ENCODE measurements at regions of chr17 and their contacts with region 1.

Region 1: GRCh38 chr17:79970576-79971068 is 65.0 kb downstream of the TBC1D16 start:
- DNase-seq: peak; percentile 66
- ATAC-seq: peak; percentile 58
- H3K4me3 Mint-ChIP-seq: no peak overlapping the region
- H3K27ac Mint-ChIP-seq: no peak overlapping the region
- H3K4me1 Mint-ChIP-seq: peaks cover 27% of the 10 kb centered on the region
- H3K27me3 Mint-ChIP-seq: no peaks in the 10 kb centered on the region
- CTCF ChIP-seq: peak; percentile 75

Region 2: DNA sequence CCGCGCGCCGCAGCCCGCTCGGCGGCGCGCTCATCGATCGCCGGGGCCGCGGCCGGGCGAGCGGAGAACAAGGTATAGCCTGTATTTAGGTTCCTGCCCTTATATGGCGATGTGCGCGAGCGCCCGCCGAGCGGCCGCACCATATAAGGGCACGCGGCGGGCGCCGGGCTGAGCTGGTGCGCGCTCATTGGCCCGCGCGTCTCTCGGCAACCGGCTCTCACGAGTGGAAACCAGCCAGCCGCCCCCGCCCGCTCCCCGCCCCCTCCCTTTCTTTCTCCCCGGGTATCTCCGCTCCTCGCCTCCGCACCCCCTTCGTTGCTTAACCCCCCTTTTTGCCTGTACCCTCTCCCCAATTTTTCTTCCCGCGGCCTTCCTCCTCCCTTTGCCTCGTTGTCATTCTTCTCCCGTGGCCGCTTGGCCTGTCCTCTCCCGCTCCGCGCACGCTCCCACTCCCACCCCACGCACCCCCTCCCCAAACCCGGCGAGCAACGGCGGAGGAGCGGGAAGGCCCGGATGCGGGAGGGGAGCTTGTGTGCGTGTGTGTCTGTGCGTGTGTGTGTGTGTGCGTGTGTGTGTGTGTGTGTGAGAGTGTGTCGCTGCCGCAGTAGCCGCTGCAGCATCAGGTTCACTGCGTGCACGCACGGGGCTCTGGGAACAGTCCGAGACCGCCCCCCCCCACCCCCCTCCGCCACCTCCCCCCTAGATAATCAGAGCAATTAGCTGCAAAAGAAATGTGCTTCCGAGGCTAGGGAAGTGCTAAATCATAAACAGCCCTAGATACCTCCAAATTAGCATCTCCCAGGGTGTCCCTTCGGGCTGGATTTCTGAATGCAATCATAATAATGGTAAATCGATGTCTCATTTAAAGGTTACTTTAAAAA is 160.3 kb before region 1 on chr17:
- CTCF ChIA-PET with region 1: interaction called, 15 read pairs
- POLR2A ChIA-PET with region 1: no interaction called
- DNase-seq: peak; percentile 83
- ATAC-seq: peak; percentile 74
- H3K4me3 Mint-ChIP-seq: peak overlapping the region; percentile 59
- H3K27ac Mint-ChIP-seq: no peak overlapping the region
- H3K4me1 Mint-ChIP-seq: peaks cover 40% of the 10 kb centered on the region
- H3K27me3 Mint-ChIP-seq: peaks cover 92% of the 10 kb centered on the region
- CTCF ChIP-seq: no peak

Region 3: DNA sequence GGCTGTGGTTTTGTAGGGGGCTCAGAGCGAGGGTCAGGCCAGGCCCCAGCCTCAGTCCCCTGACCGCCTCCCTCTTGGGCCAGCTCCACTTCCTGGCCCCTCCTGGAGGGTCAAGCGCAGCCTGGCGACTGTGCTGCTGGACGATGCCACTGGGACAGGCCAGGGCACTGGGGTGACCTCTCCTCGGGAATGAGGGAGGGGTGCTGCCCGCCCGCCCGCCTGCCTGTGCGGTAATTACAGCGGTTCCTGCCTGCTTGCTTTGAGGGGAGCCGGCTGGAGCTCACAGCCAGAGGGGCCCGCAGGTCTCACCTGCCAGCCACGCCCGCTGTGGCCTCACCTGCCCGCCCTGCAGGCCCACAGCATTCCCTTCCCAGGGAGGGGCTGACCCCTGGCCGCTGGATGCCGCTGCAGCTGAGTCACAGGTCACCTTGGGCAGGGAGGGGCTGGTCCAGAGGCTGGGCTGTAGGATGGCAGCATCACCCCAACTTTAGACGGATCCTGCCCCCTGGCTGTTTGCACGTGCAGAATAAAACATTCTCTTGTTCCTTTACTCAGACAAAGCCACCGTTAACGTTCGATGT is 54.7 kb before region 1 on chr17:
- CTCF ChIA-PET with region 1: interaction called, 10 read pairs
- POLR2A ChIA-PET with region 1: no interaction called
- DNase-seq: peak; percentile 72
- ATAC-seq: peak; percentile 76
- H3K4me3 Mint-ChIP-seq: no peak overlapping the region
- H3K27ac Mint-ChIP-seq: no peak overlapping the region
- H3K4me1 Mint-ChIP-seq: peaks cover 4% of the 10 kb centered on the region; the same call in 1 of the 2 replicates
- H3K27me3 Mint-ChIP-seq: no peaks in the 10 kb centered on the region
- CTCF ChIP-seq: no peak

Region 4: DNA sequence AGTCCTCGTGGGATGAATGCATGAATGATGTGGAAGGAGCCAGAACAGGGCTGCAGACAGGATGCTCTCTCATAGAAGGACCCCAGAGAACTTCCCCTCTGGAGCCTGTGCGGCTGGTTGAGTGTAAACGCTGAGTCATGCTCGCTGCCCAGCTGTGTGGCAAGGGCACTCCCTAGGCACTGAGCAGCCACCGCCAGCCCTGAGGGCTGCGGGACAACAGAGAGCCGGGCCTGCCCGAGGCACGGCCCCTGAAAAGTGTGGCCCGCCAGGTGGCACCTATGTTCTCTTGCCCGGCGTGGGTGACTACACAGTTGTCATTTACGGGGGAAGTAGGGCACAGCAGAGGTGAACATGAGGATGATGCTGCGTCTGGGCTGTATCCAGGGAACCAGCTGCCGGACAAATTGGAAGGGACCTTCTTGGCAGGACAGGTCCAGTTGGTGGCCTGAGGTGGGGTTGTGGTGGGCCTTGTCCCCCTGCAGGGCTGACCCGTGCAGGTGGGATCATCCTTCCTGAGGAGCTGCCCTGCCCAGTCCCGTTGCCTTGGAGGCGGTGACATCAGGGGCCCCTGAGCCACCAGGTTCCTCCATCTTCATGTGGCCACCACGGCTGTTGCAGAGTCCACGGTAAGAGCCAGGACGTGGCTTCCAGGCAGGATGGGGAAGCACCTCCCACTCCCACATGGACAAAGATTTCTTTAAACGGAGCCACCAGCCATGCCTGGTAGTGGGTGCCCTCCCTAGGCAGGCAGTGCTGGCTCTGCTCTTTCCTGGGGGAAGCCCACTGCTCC is 36.6 kb before region 1 on chr17:
- CTCF ChIA-PET with region 1: interaction called, 22 read pairs
- POLR2A ChIA-PET with region 1: interaction called, 5 read pairs
- DNase-seq: no peak
- ATAC-seq: no peak
- H3K4me3 Mint-ChIP-seq: no peak overlapping the region
- H3K27ac Mint-ChIP-seq: peak overlapping the region; percentile 49; the same call in 1 of the 2 replicates
- H3K4me1 Mint-ChIP-seq: peaks cover 77% of the 10 kb centered on the region
- H3K27me3 Mint-ChIP-seq: peaks cover under 1% of the 10 kb centered on the region
- CTCF ChIP-seq: no peak

Region 5: GRCh38 chr17:79959042-79959441 is 11.6 kb before region 1 on chr17:
- CTCF ChIA-PET with region 1: interaction called, 71 read pairs
- POLR2A ChIA-PET with region 1: no interaction called
- DNase-seq: no peak
- ATAC-seq: no peak
- H3K4me3 Mint-ChIP-seq: no peak overlapping the region
- H3K27ac Mint-ChIP-seq: no peak overlapping the region
- H3K4me1 Mint-ChIP-seq: peaks cover 34% of the 10 kb centered on the region
- H3K27me3 Mint-ChIP-seq: no peaks in the 10 kb centered on the region; the same call in 1 of the 2 replicates
- CTCF ChIP-seq: no peak

Region 6: DNA sequence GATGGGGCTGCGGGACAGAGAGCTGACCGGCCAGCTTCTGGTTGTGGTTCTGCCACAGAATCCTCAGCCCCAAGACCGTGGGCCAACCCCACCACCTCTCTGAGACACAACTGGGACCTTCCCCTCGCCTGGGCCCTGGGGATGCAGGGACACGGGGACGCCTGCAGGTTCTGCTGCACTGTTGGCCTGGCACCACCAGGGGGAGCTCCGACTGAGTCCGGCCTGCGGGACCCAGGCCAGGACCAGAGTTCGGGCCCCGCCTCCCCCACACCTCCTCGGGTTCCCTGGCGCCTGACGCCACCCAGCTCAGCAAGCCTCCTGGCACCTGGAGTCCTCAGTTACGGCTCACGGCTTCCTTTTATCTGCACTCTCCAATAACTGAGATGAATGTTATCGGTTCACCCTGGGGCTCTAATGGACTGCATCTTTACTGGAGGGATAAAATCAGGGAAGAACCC is 37.8 kb after region 1 on chr17:
- CTCF ChIA-PET with region 1: interaction called, 13 read pairs
- POLR2A ChIA-PET with region 1: interaction called, 4 read pairs
- DNase-seq: peak; percentile 94
- ATAC-seq: peak; percentile 87
- H3K4me3 Mint-ChIP-seq: no peak overlapping the region
- H3K27ac Mint-ChIP-seq: no peak overlapping the region
- H3K4me1 Mint-ChIP-seq: peaks cover 5% of the 10 kb centered on the region
- H3K27me3 Mint-ChIP-seq: no peaks in the 10 kb centered on the region
- CTCF ChIP-seq: peak; percentile 94

Region 7: GRCh38 chr17:80071116-80071980 is 100.7 kb after region 1 on chr17:
- CTCF ChIA-PET with region 1: no interaction called
- POLR2A ChIA-PET with region 1: no interaction called
- DNase-seq: no peak
- ATAC-seq: no peak
- H3K4me3 Mint-ChIP-seq: no peak overlapping the region
- H3K27ac Mint-ChIP-seq: peak overlapping the region; percentile 42; the same call in 1 of the 2 replicates
- H3K4me1 Mint-ChIP-seq: peaks cover 8% of the 10 kb centered on the region
- H3K27me3 Mint-ChIP-seq: no peaks in the 10 kb centered on the region
- CTCF ChIP-seq: no peak

Measured in WTC11 (cell line).